ENCODE measurements at regions of chr5 and their contacts with region 1.

Region 1: GRCh38 chr5:179697993-179698934 is 503 bp upstream of the CANX start:
- H3K4me3 Mint-ChIP-seq: peak overlapping the region; percentile 98
- H3K27ac Mint-ChIP-seq: peak overlapping the region; percentile 99
- H3K4me1 Mint-ChIP-seq: peaks cover 47% of the 10 kb centered on the region
- H3K27me3 Mint-ChIP-seq: no peaks in the 10 kb centered on the region

Region 2: DNA sequence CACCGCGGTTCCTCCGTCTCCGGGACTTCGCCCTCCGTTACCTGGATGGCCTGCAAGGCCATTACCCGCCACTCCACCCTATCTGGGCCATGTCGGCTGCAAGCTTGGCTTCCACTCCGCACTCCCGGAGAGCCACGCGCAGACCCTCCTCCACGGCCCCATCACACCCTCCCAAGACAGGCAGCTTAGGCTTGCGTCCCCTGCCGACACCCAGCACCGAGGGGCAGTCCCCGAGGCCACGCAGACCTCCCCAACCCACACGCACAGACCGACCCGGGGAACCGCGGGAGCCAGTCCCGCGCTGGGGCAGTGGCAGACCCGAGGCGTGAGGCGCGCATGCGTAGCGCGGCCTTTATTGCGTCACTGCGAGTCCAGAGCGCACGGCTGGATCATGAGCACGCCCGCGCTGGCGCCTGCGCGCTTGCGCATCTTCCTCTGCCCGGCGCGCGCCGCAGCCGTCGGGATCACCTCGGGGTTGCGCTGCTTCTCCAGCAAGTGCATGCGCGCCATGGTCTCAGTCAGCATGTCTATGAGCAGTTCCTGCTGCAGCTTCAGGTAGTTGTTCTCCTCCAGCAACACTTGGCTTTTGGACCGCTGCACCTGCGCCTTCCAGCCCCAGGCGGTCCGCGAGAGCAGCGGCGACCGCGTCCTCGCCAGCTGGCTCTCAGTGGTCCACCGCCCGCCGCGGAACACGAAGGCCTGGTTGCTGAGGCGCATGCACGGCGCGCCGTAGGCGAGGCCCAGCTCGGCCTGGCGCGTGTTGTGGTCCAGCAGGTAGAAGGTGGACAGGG is 19.8 kb before region 1 on chr5:
- intact Hi-C with region 1: loop called (anchors 1 kb)
- H3K4me3 Mint-ChIP-seq: peak overlapping the region; percentile 94
- H3K27ac Mint-ChIP-seq: peak overlapping the region; percentile 94
- H3K4me1 Mint-ChIP-seq: peaks cover 53% of the 10 kb centered on the region
- H3K27me3 Mint-ChIP-seq: no peaks in the 10 kb centered on the region

Region 3: GRCh38 chr5:179732417-179732917 is 34.2 kb after region 1 on chr5 and contains the start of gene MAML1:
- intact Hi-C with region 1: loop called (anchors 2 kb)
- H3K4me3 Mint-ChIP-seq: peak within 1 kb of the TSS; percentile 87
- H3K27ac Mint-ChIP-seq: peak within 1 kb of the TSS; percentile 88
- H3K4me1 Mint-ChIP-seq: peaks cover 63% of the 10 kb centered on the region
- H3K27me3 Mint-ChIP-seq: no peaks in the 10 kb centered on the region

Region 4: DNA sequence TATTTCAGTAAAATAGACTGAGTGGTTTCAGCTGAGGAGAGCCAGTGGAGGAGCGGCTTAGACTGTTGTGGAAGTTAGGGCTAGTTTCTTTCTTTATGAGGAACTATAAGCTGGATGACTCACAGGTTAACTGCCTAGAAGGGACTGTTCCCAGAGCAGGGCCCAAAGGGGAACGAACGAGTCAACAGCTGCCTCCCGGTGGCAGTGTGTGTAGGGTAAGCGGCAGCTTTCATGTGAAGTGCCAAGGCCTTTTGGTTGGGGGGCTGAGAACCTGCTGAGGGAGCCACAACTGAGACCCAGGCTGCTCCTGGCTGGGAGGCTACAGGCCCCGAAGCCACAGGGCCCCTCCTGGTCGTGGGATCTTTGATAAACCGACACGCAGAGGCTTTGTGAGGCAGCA is 129.4 kb after region 1 on chr5:
- intact Hi-C with region 1: no loop called
- H3K4me3 Mint-ChIP-seq: peak overlapping the region; percentile 45
- H3K27ac Mint-ChIP-seq: peak overlapping the region; percentile 72
- H3K4me1 Mint-ChIP-seq: peaks cover 67% of the 10 kb centered on the region
- H3K27me3 Mint-ChIP-seq: no peaks in the 10 kb centered on the region

Measured in dendritic cell treated with granulocyte-macrophage colony-stimulating factor and Interleukin-4, amounts not matched to agents 40 ng/mL and 50 ng/mL, for 4 days (primary cell).